ENCODE measurements at regions of chr1 and their contacts with region 1.

Region 1: GRCh38 chr1:174874331-174875053 is 125.3 kb upstream of the CACYBP start:
- DNase-seq: peak; percentile 76
- H3K4me3 ChIP-seq: peak overlapping the region; percentile 72
- H3K27ac ChIP-seq: peak overlapping the region; percentile 89
- H3K4me1 ChIP-seq: peaks cover 70% of the 10 kb centered on the region
- CTCF ChIP-seq: no peak

Region 2: DNA sequence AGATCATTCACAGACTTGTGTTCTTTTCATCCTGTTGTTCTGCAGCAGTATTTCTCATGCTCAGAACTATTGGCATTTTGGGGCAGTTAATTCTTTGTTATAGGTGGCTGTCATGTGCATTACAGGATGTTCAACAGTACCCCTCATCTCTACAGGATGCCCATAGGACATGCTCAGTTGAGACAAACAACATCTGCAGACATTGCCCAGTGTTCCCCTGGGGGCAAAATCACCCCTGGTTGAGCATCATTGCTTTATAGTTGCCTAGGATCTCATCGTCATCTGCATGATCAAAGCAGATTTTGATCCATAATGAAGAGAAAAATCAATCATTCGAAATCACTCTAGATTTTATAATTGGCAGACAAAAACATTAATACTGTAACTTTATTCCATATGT is 97.2 kb before region 1 on chr1:
- CTCF ChIA-PET with region 1: no interaction called
- POLR2A ChIA-PET with region 1: interaction called, 7 read pairs
- intact Hi-C with region 1: loop called (anchors 1 kb)
- DNase-seq: peak; percentile 95
- H3K4me3 ChIP-seq: no peak overlapping the region
- H3K27ac ChIP-seq: peak overlapping the region; percentile 93
- H3K4me1 ChIP-seq: peaks cover 61% of the 10 kb centered on the region
- CTCF ChIP-seq: no peak

Region 3: GRCh38 chr1:174815036-174815435 is 59.5 kb before region 1 on chr1:
- CTCF ChIA-PET with region 1: no interaction called
- POLR2A ChIA-PET with region 1: interaction called, 24 read pairs
- intact Hi-C with region 1: loop called (anchors 2 kb)
- DNase-seq: peak; percentile 36
- H3K4me3 ChIP-seq: peak overlapping the region; percentile 37
- H3K27ac ChIP-seq: peak overlapping the region; percentile 77
- H3K4me1 ChIP-seq: peaks cover 87% of the 10 kb centered on the region
- CTCF ChIP-seq: no peak

Region 4: GRCh38 chr1:174942547-174943255 is 68.2 kb after region 1 on chr1:
- CTCF ChIA-PET with region 1: no interaction called
- POLR2A ChIA-PET with region 1: interaction called, 8 read pairs
- intact Hi-C with region 1: loop called (anchors 5 kb)
- DNase-seq: peak; percentile 84
- H3K4me3 ChIP-seq: peak overlapping the region; percentile 45
- H3K27ac ChIP-seq: peak overlapping the region; percentile 74
- H3K4me1 ChIP-seq: peaks cover 63% of the 10 kb centered on the region
- CTCF ChIP-seq: no peak

Region 5: DNA sequence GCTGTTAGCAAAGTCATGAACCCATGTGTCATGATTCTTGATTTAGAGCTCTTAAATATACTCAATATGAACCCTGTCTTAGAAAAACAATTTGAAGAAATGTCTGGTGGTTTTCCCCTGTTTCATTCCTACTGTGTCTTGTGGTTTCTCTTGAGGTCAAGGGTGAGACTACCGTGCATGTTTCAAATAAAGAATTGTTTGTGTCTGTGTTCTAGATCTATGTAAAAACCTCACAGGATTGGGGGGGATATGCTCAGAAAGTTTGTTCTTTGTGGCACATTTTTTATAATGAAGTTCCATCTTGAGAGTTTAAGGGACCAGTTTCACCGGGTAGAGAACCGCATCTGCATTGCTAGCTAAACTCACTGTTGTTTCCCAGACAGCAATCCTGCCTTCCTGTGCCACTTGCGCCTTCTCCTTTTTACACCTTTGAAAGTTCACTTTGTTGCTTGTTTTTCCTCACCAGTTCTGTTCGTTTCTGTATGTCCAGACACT is 94.3 kb after region 1 on chr1:
- CTCF ChIA-PET with region 1: interaction called, 3 read pairs
- POLR2A ChIA-PET with region 1: interaction called, 23 read pairs
- intact Hi-C with region 1: loop called (anchors 1 kb)
- DNase-seq: peak; percentile 37
- H3K4me3 ChIP-seq: peak overlapping the region; percentile 0
- H3K27ac ChIP-seq: peak overlapping the region; percentile 93
- H3K4me1 ChIP-seq: peaks cover 67% of the 10 kb centered on the region
- CTCF ChIP-seq: no peak

Region 6: GRCh38 chr1:174999216-174999925 is 124.9 kb after region 1 on chr1:
- CTCF ChIA-PET with region 1: no interaction called
- POLR2A ChIA-PET with region 1: interaction called, 13 read pairs
- intact Hi-C with region 1: loop called (anchors 1 kb)
- DNase-seq: peak; percentile 99
- H3K4me3 ChIP-seq: peak overlapping the region; percentile 95
- H3K27ac ChIP-seq: peak overlapping the region; percentile 92
- H3K4me1 ChIP-seq: peaks cover 41% of the 10 kb centered on the region
- CTCF ChIP-seq: no peak